Right cardiac atrium (tissue), 5 donors: ENCODE measurements at regions of chr4 and their contacts with region 1.

Region 1: DNA sequence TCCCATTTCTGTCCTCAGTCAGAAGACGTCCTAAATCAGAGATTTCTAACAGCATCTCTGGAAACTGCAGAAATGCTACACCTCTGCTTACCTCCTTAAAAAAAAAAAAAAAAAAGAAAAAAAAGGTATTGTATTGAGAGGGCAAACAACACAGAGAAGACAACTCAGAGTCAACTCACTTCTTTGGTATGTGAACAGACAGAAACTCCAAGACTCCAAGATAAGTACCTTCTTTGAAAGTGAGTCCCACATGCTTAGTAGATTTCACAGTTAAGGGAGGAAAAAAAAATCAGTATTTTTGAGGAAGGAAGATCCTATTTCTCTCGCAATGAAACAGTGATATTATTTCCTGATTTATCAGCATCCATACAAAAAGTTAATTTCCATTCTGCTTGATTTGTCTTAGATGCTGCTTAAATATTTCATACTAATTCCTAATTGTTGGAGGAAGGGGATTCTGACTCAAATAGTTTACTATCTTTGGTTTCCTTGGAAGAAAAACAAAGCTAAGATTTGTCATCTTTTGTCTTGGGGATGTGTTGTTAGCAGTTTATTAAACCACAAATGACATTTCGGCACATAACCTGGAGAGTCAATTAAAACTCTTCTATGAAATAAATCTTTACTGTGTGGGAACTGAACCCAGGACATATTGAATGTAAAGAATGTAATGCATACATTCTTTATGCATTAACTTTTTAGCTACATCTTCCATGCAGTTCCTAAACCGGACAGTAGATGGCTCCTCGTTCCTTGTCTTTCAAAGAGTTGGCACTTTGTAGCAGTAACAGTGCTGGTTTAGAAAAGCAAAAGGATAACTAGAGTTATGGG is 4.7 kb downstream of the RASGEF1B start:
- DNase-seq: peak in 2 of 3 donors; percentile 33 to 54
- ATAC-seq: no peak
- H3K4me3 ChIP-seq: no peak overlapping the region
- H3K27ac ChIP-seq: no peak overlapping the region
- H3K4me1 ChIP-seq: peaks cover 2% of the 10 kb centered on the region
- H3K27me3 ChIP-seq: no peaks in the 10 kb centered on the region

Region 2: DNA sequence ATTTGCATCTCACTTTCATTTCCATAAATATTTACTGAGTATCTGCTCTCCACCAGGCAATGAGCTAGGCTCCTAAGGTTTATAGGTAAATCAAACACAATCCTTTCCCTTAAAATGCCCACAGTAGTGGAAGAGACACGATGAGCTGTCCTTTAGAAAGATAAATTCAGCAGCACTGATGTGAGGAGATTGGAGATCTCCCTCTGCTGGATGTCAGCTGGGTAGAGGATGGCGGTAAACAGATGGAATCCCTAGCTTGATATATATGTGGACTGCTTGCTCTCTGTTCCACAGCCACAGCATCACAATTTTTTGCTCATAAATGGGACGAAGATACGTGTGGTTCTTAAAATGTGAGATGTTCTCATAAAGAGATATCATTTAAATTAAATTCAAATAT is 221.0 kb after region 1 on chr4:
- intact Hi-C with region 1: loop called in 2 of 4 experiments (anchors 10 kb)
- DNase-seq: no peak
- ATAC-seq: peak in 1 of 2 donors; percentile 20
- H3K4me3 ChIP-seq: no peak overlapping the region
- H3K27ac ChIP-seq: no peak overlapping the region
- H3K4me1 ChIP-seq: peaks cover 6% of the 10 kb centered on the region
- H3K27me3 ChIP-seq: no peaks in the 10 kb centered on the region

Region 3: DNA sequence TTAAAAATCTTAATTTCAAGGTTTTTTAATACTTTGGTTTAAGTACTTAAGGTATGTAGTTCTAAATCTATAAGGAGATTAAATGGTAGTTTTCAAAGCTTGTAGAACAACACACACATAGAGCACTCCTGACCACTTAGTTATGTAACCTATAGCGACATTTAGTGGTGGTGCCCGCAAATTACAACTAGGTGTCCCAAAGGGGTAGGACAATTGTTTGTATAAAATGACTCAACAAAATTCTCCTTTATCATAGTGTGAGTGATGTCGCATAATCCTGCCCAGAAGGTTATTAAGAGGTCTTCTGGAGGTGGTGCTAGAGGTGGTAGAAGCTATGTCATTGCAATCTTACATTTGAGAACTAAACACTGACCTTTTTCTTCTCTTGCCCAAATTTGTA is 377.7 kb after region 1 on chr4:
- intact Hi-C with region 1: loop called (anchors 1 to 5 kb)
- DNase-seq: peak; percentile 37 to 79 (median 71)
- ATAC-seq: peak; percentile 91 to 94
- H3K4me3 ChIP-seq: no peak overlapping the region
- H3K27ac ChIP-seq: no peak overlapping the region
- H3K4me1 ChIP-seq: no peaks in the 10 kb centered on the region
- H3K27me3 ChIP-seq: no peaks in the 10 kb centered on the region